ENCODE measurements at regions of chr12 and their contacts with region 1.

Region 1: GRCh38 chr12:102484428-102484958 is 4.1 kb upstream of the IGF1 start:
- DNase-seq: peak; percentile 65
- H3K4me3 ChIP-seq: peak overlapping the region in 1 of 3 experiments; percentile 35
- H3K27ac ChIP-seq: no peak overlapping the region
- H3K4me1 ChIP-seq: peaks cover 12% of the 10 kb centered on the region
- H3K27me3 ChIP-seq: no peaks in the 10 kb centered on the region
- CTCF ChIP-seq: peak; percentile 83 to 89
- POLR2A ChIP-seq: no peak

Region 2: GRCh38 chr12:101773650-101774162 is 710.8 kb before region 1 on chr12:
- CTCF ChIA-PET with region 1: interaction called, 4 read pairs
- POLR2A ChIA-PET with region 1: no interaction called
- dilution Hi-C with region 1: no loop called
- intact Hi-C with region 1: loop called (anchors 1 kb)
- DNase-seq: peak; percentile 71
- H3K4me3 ChIP-seq: no peak overlapping the region
- H3K27ac ChIP-seq: no peak overlapping the region
- H3K4me1 ChIP-seq: no peaks in the 10 kb centered on the region
- H3K27me3 ChIP-seq: no peaks in the 10 kb centered on the region
- CTCF ChIP-seq: peak; percentile 73 to 84
- POLR2A ChIP-seq: no peak

Region 3: GRCh38 chr12:102067574-102068258 is 416.8 kb before region 1 on chr12:
- CTCF ChIA-PET with region 1: interaction called, 19 read pairs
- POLR2A ChIA-PET with region 1: no interaction called
- dilution Hi-C with region 1: no loop called
- intact Hi-C with region 1: no loop called
- DNase-seq: no peak
- H3K4me3 ChIP-seq: no peak overlapping the region
- H3K27ac ChIP-seq: no peak overlapping the region
- H3K4me1 ChIP-seq: peaks cover 12% of the 10 kb centered on the region
- H3K27me3 ChIP-seq: no peaks in the 10 kb centered on the region
- CTCF ChIP-seq: no peak
- POLR2A ChIP-seq: no peak

Region 4: GRCh38 chr12:102119674-102120563 is 364.6 kb before region 1 on chr12 and contains the starts of genes NUP37 and PARPBP:
- CTCF ChIA-PET with region 1: interaction called, 21 read pairs
- POLR2A ChIA-PET with region 1: no interaction called
- dilution Hi-C with region 1: no loop called
- intact Hi-C with region 1: loop called (anchors 1 kb)
- DNase-seq: peak; percentile 93
- H3K4me3 ChIP-seq: peak within 1 kb of the TSS; percentile 67 to 96 (median 89)
- H3K27ac ChIP-seq: peak within 1 kb of the TSS; percentile 73
- H3K4me1 ChIP-seq: peaks cover 17% of the 10 kb centered on the region
- H3K27me3 ChIP-seq: no peaks in the 10 kb centered on the region
- CTCF ChIP-seq: no peak
- POLR2A ChIP-seq: peak; percentile 91
- total RNA-seq, gene NUP37: 41.3 and 46.8 TPM in 2 replicates
- total RNA-seq, gene PARPBP: 19.0 and 19.6 TPM in 2 replicates

Region 5: DNA sequence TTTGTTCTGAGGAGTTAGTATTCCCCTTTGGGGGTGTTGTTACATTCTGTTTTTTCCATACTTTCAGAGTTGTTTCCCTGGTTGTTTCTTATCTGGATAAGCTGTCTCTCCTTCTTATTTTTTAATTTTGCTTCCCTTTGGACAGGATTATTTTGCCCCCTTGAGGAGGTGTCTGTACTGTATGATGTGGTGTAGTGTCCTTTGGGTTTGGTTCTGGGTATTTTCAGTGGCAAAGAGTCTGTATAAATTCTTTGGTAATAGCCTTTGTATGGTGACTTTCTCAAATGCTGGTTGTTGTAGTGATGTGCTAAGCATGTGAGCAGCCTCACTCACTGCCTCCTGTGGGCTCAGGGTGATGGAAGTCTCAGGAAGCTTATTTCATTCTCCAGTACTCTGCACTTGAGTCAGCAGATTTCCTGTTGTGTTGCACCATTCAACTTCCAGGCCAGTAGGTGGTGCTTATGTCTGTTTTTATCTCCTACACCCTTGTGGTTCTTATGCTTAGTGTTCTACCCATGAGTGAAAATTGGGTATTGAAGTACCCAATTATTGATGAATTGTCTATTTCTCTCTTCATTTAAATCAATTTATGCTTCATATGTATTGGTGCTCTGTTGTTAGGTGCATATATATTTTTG is 183.6 kb before region 1 on chr12:
- CTCF ChIA-PET with region 1: interaction called, 13 read pairs
- POLR2A ChIA-PET with region 1: no interaction called
- dilution Hi-C with region 1: no loop called
- intact Hi-C with region 1: loop called (anchors 1 kb)
- DNase-seq: peak; percentile 50
- H3K4me3 ChIP-seq: no peak overlapping the region
- H3K27ac ChIP-seq: no peak overlapping the region
- H3K4me1 ChIP-seq: no peaks in the 10 kb centered on the region
- H3K27me3 ChIP-seq: no peaks in the 10 kb centered on the region
- CTCF ChIP-seq: peak; percentile 24 to 38
- POLR2A ChIP-seq: no peak

Region 6: DNA sequence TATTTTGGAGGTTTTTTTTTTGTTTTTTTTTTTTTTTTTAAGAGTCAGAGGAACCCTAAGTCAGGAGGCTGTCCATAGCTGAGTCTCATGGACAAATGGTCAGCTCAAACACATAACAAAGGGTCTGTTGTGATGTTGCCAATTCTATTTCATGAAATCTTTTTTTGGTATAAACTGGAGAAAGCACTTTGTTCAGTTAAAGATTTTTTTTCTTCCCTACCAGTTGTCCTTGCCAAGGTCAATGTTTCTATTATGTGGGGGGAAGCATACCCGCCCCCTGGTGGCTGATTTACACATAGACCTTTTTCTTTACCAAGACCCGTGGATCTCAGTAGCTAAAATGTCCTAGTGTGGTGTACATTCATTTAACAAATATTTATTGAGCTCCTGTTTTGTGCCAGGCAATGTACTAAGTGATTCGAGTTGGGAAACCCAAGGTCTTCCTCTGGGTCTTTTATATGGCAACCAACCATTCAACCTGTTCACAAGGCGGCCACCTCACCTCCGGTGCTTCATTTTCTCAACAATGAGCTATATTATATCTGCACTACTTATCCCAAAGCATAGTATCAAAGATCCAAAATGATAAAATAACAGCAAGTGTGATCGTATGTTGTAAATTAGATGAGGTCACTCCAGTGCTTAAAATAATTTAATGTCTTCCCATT is 218.1 kb after region 1 on chr12:
- CTCF ChIA-PET with region 1: no interaction called
- POLR2A ChIA-PET with region 1: no interaction called
- dilution Hi-C with region 1: no loop called
- intact Hi-C with region 1: loop called (anchors 10 kb)
- DNase-seq: peak; percentile 24
- H3K4me3 ChIP-seq: no peak overlapping the region
- H3K27ac ChIP-seq: no peak overlapping the region
- H3K4me1 ChIP-seq: no peaks in the 10 kb centered on the region
- H3K27me3 ChIP-seq: no peaks in the 10 kb centered on the region
- CTCF ChIP-seq: peak; percentile 37 to 52
- POLR2A ChIP-seq: no peak

Region 7: GRCh38 chr12:102848832-102849231 is 364.3 kb after region 1 on chr12:
- CTCF ChIA-PET with region 1: no interaction called
- POLR2A ChIA-PET with region 1: no interaction called
- dilution Hi-C with region 1: no loop called
- intact Hi-C with region 1: no loop called
- DNase-seq: no peak
- H3K4me3 ChIP-seq: no peak overlapping the region
- H3K27ac ChIP-seq: no peak overlapping the region
- H3K4me1 ChIP-seq: no peaks in the 10 kb centered on the region
- H3K27me3 ChIP-seq: no peaks in the 10 kb centered on the region
- CTCF ChIP-seq: no peak
- POLR2A ChIP-seq: no peak